Cardiac septum (tissue), 1 donor: ENCODE measurements at regions of chr10 and their contacts with region 1.

Region 1: DNA sequence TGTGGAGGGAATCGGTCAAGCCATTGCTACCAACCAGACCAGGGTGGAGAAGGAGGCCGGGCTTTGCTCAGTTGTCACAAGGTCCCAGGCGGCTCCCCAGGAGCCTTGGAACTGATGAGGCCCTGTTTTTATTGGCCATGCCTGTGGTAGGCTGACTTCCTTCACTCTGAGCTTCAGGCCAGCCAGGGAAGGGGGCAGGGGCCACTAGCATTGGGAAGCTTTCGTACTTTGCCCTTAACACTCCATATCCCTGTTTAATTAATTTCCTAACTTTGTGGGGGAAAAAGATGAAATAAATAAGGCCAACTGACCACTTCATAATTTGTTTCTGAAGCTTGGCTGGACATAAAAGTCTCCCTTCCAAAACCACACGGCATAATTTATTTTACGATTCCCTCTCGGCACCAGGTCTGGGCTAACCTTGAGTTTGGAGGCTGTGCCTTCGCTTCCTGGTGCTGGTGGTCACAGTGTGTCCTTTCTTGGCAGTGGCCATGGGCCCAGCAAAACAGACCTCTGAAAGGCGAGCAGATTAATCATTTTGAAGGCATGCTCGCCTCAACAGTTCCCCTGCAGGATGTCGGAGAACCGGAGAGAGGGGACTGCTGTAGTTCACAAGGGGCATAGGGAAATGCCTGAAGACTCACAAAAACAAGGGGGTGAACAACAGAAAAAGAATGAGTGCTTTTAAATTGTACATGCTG is 965.9 kb downstream of the LRMDA start:
- DNase-seq: no peak

Region 2: GRCh38 chr10:76126607-76127527 is 270.5 kb before region 1 on chr10:
- intact Hi-C with region 1: no loop called
- DNase-seq: no peak

Region 3: GRCh38 chr10:76282061-76283035 is 115.0 kb before region 1 on chr10:
- intact Hi-C with region 1: no loop called
- DNase-seq: no peak

Region 4: GRCh38 chr10:76311752-76312636 is 85.3 kb before region 1 on chr10:
- intact Hi-C with region 1: loop called (anchors 10 kb)
- DNase-seq: no peak

Region 5: DNA sequence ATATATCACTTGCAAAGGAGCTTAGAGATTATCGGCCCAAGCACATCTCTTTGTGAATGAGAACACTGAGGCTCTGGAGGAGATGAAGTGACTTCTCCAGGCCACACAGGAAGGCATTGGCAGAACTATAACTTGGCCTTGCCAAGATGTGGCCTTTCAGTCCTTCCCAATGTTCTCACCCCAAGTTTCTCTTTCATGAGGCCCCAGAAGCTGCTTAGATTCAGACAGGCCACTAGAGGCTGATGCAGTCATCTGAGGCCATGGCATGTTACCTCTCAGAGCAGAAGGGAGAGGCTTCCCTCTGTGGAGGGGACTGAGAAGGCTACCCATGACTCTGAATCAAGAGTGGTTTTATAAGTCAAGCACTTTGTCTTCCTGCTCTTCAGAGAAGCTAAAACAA is 37.8 kb after region 1 on chr10:
- intact Hi-C with region 1: loop called (anchors 5 kb)
- DNase-seq: no peak

Region 6: DNA sequence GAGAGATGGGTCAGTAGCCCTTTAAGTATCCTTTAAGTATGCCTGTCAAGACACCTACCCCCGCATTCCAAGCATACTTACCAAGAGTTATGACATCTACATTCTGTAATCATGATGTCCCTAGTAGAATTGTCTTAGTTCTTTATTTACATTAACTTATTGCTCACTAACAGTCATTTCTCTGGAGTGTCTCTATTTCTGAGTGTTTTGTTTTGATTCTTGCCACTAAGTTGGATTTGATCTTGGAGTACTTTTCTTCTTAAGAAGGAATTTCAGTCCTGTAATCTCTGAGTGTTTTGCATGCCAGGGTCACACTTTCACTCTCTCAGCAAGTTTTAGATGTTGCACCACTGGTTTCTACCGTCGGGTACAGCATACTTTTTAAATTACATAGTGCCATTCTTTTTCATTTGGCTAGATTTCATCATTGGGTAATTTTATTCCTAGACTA is 186.4 kb after region 1 on chr10:
- intact Hi-C with region 1: no loop called
- DNase-seq: no peak